Right cardiac atrium (tissue), 5 donors: ENCODE measurements at regions of chr4 and their contacts with region 1.

Region 1: DNA sequence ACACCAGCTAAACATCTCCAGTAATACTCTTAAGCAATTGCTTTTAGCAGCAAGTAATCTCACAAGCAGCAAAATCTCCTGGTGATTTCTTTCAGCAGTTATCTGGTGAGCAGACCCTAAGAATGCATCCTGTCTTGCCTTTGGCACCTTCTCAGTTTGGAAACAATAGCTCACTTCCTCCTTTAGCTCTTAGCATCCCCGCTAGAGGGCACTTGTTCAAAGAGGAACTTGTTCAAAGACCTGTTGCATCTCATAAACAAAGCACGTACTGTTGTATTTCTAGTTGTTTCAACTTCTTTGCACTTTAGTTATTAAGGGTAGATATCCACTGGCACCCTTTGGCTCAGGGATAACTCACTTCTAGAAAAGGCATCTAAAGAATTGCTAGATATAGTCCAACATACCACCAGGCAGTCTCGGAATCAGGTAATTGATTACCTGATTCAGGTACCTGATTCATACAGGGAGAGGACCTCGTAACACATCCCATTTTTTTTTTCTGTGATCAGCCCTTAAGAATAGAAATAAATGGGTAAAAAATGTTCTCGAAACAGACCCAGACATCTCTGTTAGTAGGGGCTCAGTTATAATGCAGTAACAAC is 81.9 kb upstream of the QRFPR start:
- DNase-seq: peak in 1 of 3 donors; percentile 12
- ATAC-seq: peak; percentile 36 to 90
- H3K4me3 ChIP-seq: no peak overlapping the region
- H3K27ac ChIP-seq: no peak overlapping the region
- H3K4me1 ChIP-seq: no peaks in the 10 kb centered on the region
- H3K27me3 ChIP-seq: no peaks in the 10 kb centered on the region

Region 2: GRCh38 chr4:121656269-121656641 is 193.5 kb after region 1 on chr4:
- intact Hi-C with region 1: loop called in 1 of 4 experiments (anchors 10 kb)
- DNase-seq: peak; percentile 30 to 68 (median 65)
- ATAC-seq: peak; percentile 67 to 85
- H3K4me3 ChIP-seq: no peak overlapping the region
- H3K27ac ChIP-seq: no peak overlapping the region
- H3K4me1 ChIP-seq: no peaks in the 10 kb centered on the region
- H3K27me3 ChIP-seq: no peaks in the 10 kb centered on the region

Region 3: GRCh38 chr4:121726642-121727268 is 264.0 kb after region 1 on chr4:
- intact Hi-C with region 1: loop called in 2 of 4 experiments (anchors 5 to 10 kb)
- DNase-seq: no peak
- ATAC-seq: peak; percentile 67 to 79
- H3K4me3 ChIP-seq: no peak overlapping the region
- H3K27ac ChIP-seq: no peak overlapping the region
- H3K4me1 ChIP-seq: no peaks in the 10 kb centered on the region
- H3K27me3 ChIP-seq: no peaks in the 10 kb centered on the region